Activated CD4-positive, alpha-beta memory T cell treated with anti-CD3 and anti-CD28 coated beads for 36 hours (primary cell): ENCODE measurements at regions of chr1 and their contacts with region 1.

Region 1: DNA sequence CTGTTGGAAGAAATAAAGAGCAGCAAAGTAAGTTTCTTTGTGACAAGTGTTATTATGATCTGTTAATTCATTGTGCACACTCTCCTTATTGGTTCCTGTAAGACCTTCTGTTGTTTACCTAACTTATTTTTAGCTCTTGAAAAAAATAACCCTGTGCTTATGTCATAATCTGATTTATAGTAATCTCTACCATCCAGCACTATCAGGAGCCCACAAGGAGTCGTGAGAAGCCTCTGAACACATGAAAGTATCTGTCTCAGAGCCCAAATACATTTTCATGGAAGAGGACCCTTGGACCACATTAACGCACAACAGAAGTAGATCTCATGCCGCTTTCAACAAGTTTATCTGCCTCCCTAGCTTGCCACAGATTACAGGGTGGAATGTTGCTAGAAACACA is 45.8 kb downstream of the CENPF start:
- DNase-seq: no peak
- H3K4me3 Mint-ChIP-seq: no peak overlapping the region
- H3K27ac Mint-ChIP-seq: no peak overlapping the region
- H3K4me1 Mint-ChIP-seq: peaks cover 3% of the 10 kb centered on the region
- H3K27me3 Mint-ChIP-seq: no peaks in the 10 kb centered on the region

Region 2: GRCh38 chr1:214637722-214638458 is 10.9 kb before region 1 on chr1:
- CTCF ChIA-PET with region 1: interaction called, 12 read pairs
- POLR2A ChIA-PET with region 1: no interaction called
- intact Hi-C with region 1: no loop called
- DNase-seq: peak; percentile 21
- H3K4me3 Mint-ChIP-seq: no peak overlapping the region
- H3K27ac Mint-ChIP-seq: peak overlapping the region; percentile 2
- H3K4me1 Mint-ChIP-seq: peaks cover 30% of the 10 kb centered on the region
- H3K27me3 Mint-ChIP-seq: no peaks in the 10 kb centered on the region